MCF 10A (cell line): ENCODE measurements at regions of chr5 and their contacts with region 1.

Region 1: GRCh38 chr5:141968914-141969608 is at the start of gene RNF14:
- DNase-seq: peak; percentile 97
- H3K4me3 Mint-ChIP-seq: peak within 1 kb of the TSS; percentile 88
- H3K27ac Mint-ChIP-seq: peak within 1 kb of the TSS; percentile 99
- H3K4me1 Mint-ChIP-seq: peaks cover 24% of the 10 kb centered on the region
- H3K27me3 Mint-ChIP-seq: no peaks in the 10 kb centered on the region
- CTCF ChIP-seq: peak; percentile 100
- total RNA-seq, gene RNF14: 78.0 and 81.3 TPM in 2 replicates

Region 2: DNA sequence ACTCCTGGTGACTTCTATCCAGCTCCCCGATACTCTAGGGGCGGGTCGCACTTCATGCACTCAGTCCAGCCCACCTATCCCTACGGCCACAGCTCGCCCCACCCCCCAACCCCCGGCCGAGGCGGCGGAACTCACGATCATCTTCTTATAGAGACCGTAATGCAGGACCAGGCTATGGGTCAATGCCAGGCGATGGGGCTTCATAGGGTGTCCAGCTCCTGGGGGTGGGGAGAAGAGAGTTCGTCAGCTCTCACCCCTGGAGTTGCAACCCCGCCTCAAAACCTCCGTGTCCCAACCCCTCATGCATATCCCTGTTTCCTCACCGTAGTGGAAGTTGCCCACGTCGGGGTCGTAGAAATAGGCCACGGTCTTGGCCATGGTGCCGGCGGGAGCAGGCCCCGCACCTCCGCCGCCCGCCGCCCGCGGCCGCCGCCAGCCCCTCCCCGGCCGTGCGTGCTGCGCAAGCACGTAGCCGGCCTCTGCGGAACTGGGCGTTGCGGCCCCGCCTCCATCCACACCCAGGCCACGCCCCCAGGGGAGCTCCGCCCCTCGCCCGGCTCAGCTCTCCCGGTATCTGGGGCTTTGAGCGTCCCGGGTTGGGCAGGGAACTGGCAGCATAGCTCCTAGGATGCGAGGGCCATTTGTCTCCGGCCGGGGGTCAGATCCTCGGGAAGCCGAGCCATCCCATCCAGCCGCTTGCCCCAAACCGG is 332.5 kb before region 1 on chr5 and contains the starts of genes HDAC3 and RELL2:
- CTCF ChIA-PET with region 1: interaction called, 4 read pairs
- POLR2A ChIA-PET with region 1: interaction called, 23 read pairs
- intact Hi-C with region 1: no loop called
- DNase-seq: peak; percentile 95
- H3K4me3 Mint-ChIP-seq: peak within 1 kb of the TSS; percentile 92
- H3K27ac Mint-ChIP-seq: peak within 1 kb of the TSS; percentile 47
- H3K4me1 Mint-ChIP-seq: peaks cover 42% of the 10 kb centered on the region
- H3K27me3 Mint-ChIP-seq: no peaks in the 10 kb centered on the region
- CTCF ChIP-seq: no peak
- total RNA-seq, gene HDAC3: 83.5 and 85.6 TPM in 2 replicates
- total RNA-seq, gene RELL2: 12.5 and 13.3 TPM in 2 replicates

Region 3: DNA sequence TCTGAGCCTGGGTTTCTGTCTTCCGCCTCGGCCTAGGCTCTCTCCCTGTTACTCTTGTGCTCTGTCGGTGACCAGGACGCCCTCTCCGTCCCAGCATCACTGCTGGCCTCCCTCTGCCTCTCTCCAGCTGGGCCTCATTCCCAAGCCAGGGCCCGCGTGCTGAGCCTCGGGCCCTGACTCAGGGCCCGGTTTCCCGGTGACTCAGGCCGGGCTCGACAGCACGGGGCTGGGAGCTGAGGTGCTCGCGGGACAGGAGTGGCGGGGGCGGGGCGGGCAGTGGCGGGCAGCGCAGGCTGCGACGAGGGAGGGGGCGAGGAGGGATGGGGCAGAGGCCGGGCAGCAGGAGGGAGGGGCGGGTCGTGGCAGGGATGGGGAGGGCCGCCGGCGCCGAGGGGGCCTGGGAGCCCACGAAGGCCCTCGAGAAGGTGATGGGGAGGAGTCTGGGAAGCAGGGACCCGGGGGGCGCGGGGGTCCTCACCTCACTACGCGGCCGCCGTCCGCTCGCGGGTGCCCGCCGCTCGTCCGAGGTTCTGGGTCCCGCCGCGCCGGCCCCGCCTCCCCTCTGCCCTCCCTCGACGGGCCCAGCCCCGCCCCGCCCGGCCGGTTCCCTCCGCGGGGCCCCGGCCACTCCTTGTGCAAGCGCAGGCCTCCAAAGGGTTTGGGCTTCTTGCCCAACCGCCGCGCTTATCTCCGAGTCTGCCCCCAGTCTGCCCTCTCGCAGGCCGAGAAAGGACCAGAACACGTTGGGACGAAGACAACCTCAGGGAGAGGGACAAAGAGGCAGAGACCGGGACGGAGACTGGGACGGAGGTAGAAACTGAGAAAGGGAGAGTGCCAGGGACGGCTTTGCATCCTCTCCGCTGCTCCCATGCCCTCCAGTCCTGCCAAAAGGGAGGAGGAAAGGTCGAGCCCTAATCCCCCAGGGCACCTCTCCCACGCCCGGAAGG is 287.1 kb before region 1 on chr5 and contains the start of gene ARAP3:
- CTCF ChIA-PET with region 1: interaction called, 12 read pairs
- POLR2A ChIA-PET with region 1: interaction called, 31 read pairs
- intact Hi-C with region 1: no loop called
- DNase-seq: peak; percentile 93
- H3K4me3 Mint-ChIP-seq: peak within 1 kb of the TSS; percentile 76
- H3K27ac Mint-ChIP-seq: peak within 1 kb of the TSS; percentile 93
- H3K4me1 Mint-ChIP-seq: peaks cover 14% of the 10 kb centered on the region
- H3K27me3 Mint-ChIP-seq: no peaks in the 10 kb centered on the region
- CTCF ChIP-seq: no peak
- total RNA-seq, gene ARAP3: 19.8 and 22.8 TPM in 2 replicates

Region 4: GRCh38 chr5:141778206-141778605 is 190.9 kb before region 1 on chr5:
- CTCF ChIA-PET with region 1: no interaction called
- POLR2A ChIA-PET with region 1: no interaction called
- intact Hi-C with region 1: no loop called
- DNase-seq: peak; percentile 85
- H3K4me3 Mint-ChIP-seq: no peak overlapping the region
- H3K27ac Mint-ChIP-seq: peak overlapping the region; percentile 63
- H3K4me1 Mint-ChIP-seq: peaks cover 25% of the 10 kb centered on the region
- H3K27me3 Mint-ChIP-seq: no peaks in the 10 kb centered on the region
- CTCF ChIP-seq: no peak

Region 5: DNA sequence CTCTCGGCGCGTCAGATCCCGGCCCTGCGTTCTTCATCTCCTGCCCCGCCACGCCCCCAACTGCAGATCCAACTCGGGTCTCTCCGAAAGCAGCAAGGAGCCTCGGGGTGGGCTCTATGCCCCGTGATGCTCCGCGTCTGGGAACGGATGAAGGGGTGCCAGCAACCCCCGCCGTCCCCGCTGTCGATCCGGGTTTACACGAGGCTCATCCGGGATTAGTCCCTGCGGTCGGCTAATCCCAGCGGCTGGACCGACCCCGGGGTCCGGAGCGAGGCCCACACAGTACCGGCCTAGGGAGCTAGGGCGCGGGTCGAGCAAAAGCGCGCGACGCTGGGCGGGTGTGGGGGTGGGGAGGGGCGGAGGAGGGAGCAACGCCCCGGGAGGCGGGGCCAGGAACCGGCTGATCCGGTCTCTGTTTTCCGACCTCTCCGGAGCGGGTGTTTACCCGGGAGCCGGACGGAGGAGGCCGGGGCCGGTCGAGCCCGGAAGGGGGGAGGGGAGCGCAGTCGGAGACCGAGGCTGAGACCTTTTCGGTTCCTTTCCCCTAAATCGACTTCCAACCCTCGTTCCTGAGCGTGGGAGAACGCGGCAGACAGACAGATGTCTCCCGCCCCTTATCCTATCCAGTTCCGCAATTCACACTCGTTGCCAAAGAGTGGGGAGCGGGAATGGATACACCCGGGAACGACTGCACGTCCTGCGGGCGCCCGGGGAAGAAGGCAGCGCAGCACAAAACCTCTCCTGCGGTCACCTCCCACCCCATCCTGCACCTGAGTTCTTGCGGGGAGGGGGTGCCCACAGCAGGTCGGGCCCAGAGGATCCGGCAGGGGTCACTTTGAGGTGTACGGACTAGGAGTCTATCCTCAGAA is 119.5 kb before region 1 on chr5:
- CTCF ChIA-PET with region 1: interaction called, 3 read pairs
- POLR2A ChIA-PET with region 1: interaction called, 17 read pairs
- intact Hi-C with region 1: no loop called
- DNase-seq: peak; percentile 88
- H3K4me3 Mint-ChIP-seq: peak overlapping the region; percentile 81
- H3K27ac Mint-ChIP-seq: peak overlapping the region; percentile 75
- H3K4me1 Mint-ChIP-seq: peaks cover 16% of the 10 kb centered on the region
- H3K27me3 Mint-ChIP-seq: no peaks in the 10 kb centered on the region
- CTCF ChIP-seq: no peak

Region 6: DNA sequence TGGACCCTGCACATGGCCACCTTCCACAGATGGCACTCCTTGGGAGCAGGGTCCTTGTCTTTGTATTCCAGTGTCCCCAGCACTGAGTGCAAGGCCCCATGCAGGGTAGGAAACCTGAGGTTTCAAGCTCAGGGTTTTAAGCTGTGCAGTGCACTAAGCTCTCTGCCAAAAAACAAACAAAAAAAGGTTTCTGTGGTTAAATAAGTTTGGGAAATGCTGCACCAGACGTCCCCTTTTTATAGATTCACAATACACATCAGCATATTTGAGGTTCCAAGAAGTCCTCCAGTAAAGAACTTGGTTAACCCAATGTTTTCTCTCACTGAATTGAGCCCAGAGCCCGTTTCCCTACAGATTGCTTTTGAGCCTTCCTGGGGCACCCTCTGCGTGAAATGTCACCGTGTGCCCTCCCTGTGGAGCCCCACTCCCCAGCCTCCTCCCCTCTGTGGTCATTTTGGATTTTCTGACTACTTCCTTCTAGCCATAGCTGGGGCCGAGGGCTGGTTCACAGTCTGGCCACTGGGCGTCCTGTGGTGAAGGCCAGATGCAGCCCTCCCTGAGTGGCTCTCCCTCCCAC is 28.3 kb before region 1 on chr5:
- CTCF ChIA-PET with region 1: interaction called, 11 read pairs
- POLR2A ChIA-PET with region 1: interaction called, 14 read pairs
- intact Hi-C with region 1: no loop called
- DNase-seq: no peak
- H3K4me3 Mint-ChIP-seq: no peak overlapping the region
- H3K27ac Mint-ChIP-seq: peak overlapping the region; percentile 28
- H3K4me1 Mint-ChIP-seq: peaks cover 9% of the 10 kb centered on the region
- H3K27me3 Mint-ChIP-seq: no peaks in the 10 kb centered on the region
- CTCF ChIP-seq: no peak

Region 7: DNA sequence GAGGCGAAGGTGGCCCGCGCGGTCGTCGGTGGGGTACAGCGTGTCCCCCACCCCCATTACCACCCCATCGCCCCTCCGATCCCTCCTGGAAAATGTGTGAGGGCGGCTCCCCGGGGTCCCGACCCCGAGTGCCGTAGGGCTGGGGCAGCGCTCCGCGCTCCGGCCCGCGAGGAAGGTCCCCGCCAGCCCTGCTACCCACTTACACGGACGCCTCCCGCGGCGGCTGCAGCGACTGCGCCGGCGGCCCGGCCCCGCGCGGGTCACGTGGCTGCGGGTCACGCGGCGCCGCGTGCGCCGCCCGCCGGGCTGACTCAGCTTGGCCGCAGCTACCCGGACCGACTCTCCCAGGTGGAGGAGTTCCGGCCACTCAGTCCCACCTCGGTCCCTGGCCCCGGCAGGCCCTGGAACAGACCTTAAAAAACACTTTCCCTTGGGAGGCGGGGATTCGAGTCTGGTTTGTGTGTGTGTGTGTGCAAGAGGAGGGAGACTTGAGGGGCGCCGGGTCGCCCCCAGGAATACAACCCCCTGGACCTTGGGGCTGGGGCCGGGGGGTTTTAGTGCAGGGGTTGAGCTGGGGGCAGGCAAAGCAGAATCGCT is 43.8 kb after region 1 on chr5 and contains the start of gene GNPDA1:
- CTCF ChIA-PET with region 1: interaction called, 11 read pairs
- POLR2A ChIA-PET with region 1: interaction called, 46 read pairs
- intact Hi-C with region 1: loop called (anchors 1 kb)
- DNase-seq: peak; percentile 78
- H3K4me3 Mint-ChIP-seq: peak within 1 kb of the TSS; percentile 82
- H3K27ac Mint-ChIP-seq: peak within 1 kb of the TSS; percentile 82
- H3K4me1 Mint-ChIP-seq: peaks cover 35% of the 10 kb centered on the region
- H3K27me3 Mint-ChIP-seq: no peaks in the 10 kb centered on the region
- CTCF ChIP-seq: no peak
- total RNA-seq, gene GNPDA1: 36.1 and 60.9 TPM in 2 replicates